ENCODE measurements at regions of chr10 and their contacts with region 1.

Region 1: DNA sequence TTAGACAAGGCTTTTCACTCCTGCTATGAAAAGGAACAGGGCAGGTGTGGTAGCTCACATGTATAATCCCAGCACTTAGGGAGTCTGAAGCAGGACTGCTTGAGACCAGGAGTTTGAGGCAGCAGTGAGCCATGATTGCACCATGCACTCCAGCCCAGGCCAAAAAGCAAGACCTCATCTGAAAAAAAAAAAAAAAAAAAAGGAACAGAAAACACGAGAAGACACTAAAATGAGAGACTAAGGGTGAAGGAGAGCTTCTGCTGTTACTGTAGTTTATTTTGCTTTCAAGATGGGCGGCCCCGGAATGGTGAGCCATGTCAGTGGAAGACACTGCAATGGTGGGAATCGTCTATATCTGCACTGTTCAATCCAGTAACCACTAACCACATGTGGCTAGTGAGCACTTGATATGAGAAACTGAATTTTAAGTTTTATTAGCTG is 9.9 kb downstream of the PIP4K2A start:
- DNase-seq: no peak
- H3K4me3 ChIP-seq: no peak overlapping the region
- H3K27ac ChIP-seq: no peak overlapping the region
- H3K4me1 ChIP-seq: peaks cover 0 to 11% (median 4%) of the 10 kb centered on the region in 3 donors
- H3K27me3 ChIP-seq: no peaks in the 10 kb centered on the region
- CTCF ChIP-seq: no peak

Region 2: DNA sequence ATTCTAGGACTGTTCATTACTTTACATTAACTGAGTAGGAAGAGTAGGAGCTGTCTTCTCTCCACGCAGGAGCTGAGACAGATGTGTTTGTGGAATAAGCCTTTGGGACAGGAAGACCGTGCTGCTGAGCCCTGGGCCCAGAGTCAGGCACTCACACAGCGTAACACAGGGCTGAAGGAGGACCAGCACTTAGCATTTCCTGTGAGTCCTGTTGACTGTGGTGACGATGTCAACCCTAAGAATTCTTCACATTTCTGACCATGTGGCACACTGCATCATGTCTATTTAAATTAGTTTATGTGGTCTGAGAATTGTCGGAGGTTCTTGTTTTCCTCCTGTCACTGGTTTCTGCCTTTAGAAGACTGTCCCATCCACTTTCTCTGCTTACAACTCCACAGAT is 107.4 kb before region 1 on chr10:
- intact Hi-C with region 1: loop called (anchors 10 kb)
- DNase-seq: peak in 1 of 5 donors; percentile 54
- H3K4me3 ChIP-seq: no peak overlapping the region
- H3K27ac ChIP-seq: peak overlapping the region; percentile 19 to 20
- H3K4me1 ChIP-seq: peaks cover 0 to 23% (median 10%) of the 10 kb centered on the region in 3 donors
- H3K27me3 ChIP-seq: no peaks in the 10 kb centered on the region
- CTCF ChIP-seq: no peak

Measured in kidney (tissue), 22 donors.